MCF 10A (cell line): ENCODE measurements at regions of chr13 and their contacts with region 1.

Region 1: GRCh38 chr13:76293346-76293745 is 592.9 kb downstream of the KCTD12 start:
- DNase-seq: peak; percentile 55
- H3K4me3 Mint-ChIP-seq: peak overlapping the region; percentile 25
- H3K27ac Mint-ChIP-seq: peak overlapping the region; percentile 3
- H3K4me1 Mint-ChIP-seq: peaks cover 14% of the 10 kb centered on the region
- H3K27me3 Mint-ChIP-seq: no peaks in the 10 kb centered on the region
- CTCF ChIP-seq: no peak

Region 2: GRCh38 chr13:75968103-75968838 is 325.1 kb before region 1 on chr13:
- CTCF ChIA-PET with region 1: no interaction called
- POLR2A ChIA-PET with region 1: no interaction called
- intact Hi-C with region 1: loop called (anchors 5 kb)
- DNase-seq: peak; percentile 80
- H3K4me3 Mint-ChIP-seq: no peak overlapping the region
- H3K27ac Mint-ChIP-seq: peak overlapping the region; percentile 26
- H3K4me1 Mint-ChIP-seq: peaks cover 11% of the 10 kb centered on the region
- H3K27me3 Mint-ChIP-seq: no peaks in the 10 kb centered on the region
- CTCF ChIP-seq: no peak

Region 3: DNA sequence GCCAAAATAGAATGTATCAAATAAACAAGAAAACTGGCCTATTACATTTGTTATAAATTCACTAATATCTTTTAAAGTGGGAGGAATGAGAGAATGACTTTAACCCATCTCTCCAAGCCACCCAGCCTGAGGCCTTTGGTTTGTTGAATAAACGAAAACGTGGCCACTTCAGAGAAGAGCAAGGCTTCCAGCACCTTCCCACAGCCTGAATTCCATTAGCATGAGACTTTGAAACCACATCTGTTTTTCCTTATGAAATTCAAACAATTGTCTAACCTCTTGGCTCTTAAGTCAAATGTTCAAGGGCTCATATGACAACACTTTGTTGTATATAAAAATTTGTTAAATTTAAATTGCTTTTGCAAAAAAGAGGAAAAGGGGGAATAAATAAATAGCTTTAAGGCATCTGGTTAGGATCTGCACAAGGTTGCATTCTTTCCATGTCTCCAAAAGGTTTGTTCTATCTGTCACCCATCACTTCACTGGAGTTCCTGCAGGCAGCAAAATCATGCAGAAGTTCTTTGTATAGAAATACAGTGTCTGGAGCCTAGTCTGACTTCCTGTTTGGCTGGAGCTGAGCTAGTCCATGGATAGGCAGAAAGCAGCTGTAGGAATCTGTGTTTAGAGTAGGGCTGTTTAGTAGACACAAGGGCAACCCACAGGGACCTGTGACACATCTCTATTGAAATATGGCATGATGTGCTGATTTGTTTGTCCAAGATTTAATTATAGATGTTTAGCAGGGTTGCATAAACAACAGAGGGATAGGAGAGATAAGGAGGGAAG is 90.5 kb after region 1 on chr13:
- CTCF ChIA-PET with region 1: no interaction called
- POLR2A ChIA-PET with region 1: no interaction called
- intact Hi-C with region 1: loop called (anchors 10 kb)
- DNase-seq: peak; percentile 85
- H3K4me3 Mint-ChIP-seq: no peak overlapping the region
- H3K27ac Mint-ChIP-seq: peak overlapping the region; percentile 1
- H3K4me1 Mint-ChIP-seq: peaks cover 14% of the 10 kb centered on the region
- H3K27me3 Mint-ChIP-seq: no peaks in the 10 kb centered on the region
- CTCF ChIP-seq: no peak